ENCODE measurements at regions of chr4 and their contacts with region 1.

Region 1: GRCh38 chr4:6942238-6942800 is 32.7 kb downstream of the TBC1D14 start:
- DNase-seq: peak in 9 of 10 donors; percentile 6 to 75 (median 43)
- ATAC-seq: peak; percentile 87 to 89
- H3K4me3 Mint-ChIP-seq: peak overlapping the region; percentile 71 to 90 (median 81)
- H3K27ac Mint-ChIP-seq: peak overlapping the region; percentile 84 to 97 (median 94)
- H3K4me1 Mint-ChIP-seq: peaks cover 35 to 86% (median 76%) of the 10 kb centered on the region in 4 donors
- H3K27me3 Mint-ChIP-seq: no peaks in the 10 kb centered on the region

Region 2: DNA sequence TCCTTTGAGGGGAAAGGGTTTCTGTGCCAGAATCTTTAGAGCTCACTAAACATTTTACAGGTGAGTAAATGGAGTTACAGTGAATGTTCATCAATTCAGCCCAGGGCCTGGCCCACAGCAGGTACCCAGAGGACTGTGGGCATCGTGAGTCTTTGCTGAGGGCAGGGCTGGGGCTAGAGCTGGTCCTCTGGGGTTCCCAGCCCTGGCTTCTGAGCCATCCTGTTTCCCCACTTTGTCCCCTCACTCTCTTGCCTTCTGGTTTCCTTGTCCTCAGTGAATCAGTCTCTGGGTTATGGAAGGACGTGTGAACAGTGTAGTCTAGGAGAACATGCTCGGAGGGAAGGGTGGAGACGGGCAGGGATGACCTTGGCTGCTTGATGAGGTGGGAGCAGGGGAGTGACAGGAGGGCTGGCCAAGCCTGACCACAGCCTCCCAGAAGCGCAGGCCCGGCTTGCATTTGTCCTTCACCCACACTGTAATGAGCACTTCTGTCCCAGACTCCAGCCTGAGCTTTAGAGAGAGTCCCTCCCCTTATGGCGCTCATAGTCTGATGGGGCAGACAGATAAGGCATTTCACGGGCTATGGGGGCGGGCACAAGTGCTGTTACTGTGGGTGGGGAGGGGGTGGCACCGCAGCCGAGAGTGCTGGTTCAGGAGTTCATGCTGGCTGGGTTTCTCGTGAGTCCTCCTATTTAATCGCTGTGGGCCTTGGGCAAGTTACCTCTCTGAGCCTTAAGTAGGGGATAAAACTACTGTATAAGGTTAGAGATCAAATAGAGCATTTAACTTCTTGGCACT is 15.4 kb before region 1 on chr4:
- POLR2A ChIA-PET with region 1: interaction called, 43 read pairs
- DNase-seq: peak in 8 of 10 donors; percentile 43 to 72 (median 54)
- ATAC-seq: peak; percentile 86 to 91
- H3K4me3 Mint-ChIP-seq: peak overlapping the region; percentile 65 to 87 (median 76)
- H3K27ac Mint-ChIP-seq: peak overlapping the region; percentile 84 to 95 (median 90)
- H3K4me1 Mint-ChIP-seq: peaks cover 53 to 91% (median 81%) of the 10 kb centered on the region in 4 donors
- H3K27me3 Mint-ChIP-seq: no peaks in the 10 kb centered on the region

Region 3: DNA sequence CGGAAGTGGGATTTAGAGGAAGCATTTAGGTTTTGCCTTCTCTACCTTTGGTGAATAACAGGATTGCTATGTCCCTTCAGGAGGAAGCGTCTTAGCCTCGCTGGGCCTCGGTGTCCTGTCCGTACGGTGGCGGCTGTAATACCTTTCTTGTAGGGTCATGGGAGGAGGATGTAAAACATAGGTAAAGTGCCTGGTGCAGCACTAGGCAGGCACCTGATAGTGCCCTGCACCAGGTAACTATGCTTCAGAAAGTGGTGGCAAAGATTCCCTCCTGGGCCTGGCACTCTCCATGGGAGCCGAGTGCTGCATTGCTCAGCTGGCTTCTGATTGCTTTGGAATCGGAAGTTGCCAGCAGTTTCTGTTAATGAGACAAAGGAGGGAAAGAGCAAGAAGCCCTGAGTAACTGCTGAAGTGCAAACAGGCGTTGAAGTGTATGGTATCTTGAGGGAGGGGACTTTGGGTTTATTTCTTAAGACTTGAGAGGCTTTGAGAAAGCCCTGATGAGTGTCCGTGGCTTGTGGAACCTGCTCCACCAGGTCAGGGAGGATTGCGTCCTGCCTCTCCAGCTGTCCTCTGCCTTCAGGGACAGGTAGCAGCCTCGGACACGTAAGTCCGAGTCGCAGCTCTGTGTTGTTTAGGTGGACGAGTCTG is 13.1 kb after region 1 on chr4:
- POLR2A ChIA-PET with region 1: no interaction called
- DNase-seq: no peak
- ATAC-seq: no peak
- H3K4me3 Mint-ChIP-seq: peak overlapping the region in 3 of 10 donors; percentile 22 to 30 (median 29)
- H3K27ac Mint-ChIP-seq: peak overlapping the region in 5 of 10 donors; percentile 5 to 88 (median 52)
- H3K4me1 Mint-ChIP-seq: peaks cover 32 to 75% (median 64%) of the 10 kb centered on the region in 4 donors
- H3K27me3 Mint-ChIP-seq: no peaks in the 10 kb centered on the region